GM12878 (cell line): ENCODE measurements at regions of chr5 and their contacts with region 1.

Region 1: GRCh38 chr5:37412515-37413277 is 33.6 kb downstream of the WDR70 start:
- DNase-seq: no peak
- ATAC-seq: peak; percentile 92
- H3K4me3 ChIP-seq: no peak overlapping the region
- H3K27ac ChIP-seq: no peak overlapping the region
- H3K4me1 ChIP-seq: no peaks in the 10 kb centered on the region
- H3K27me3 ChIP-seq: no peaks in the 10 kb centered on the region
- CTCF ChIP-seq: peak; percentile 78 to 90 (median 84)
- EP300 ChIP-seq: no peak
- POLR2A ChIP-seq: no peak
- RAD21 ChIP-seq: peak; percentile 88

Region 2: DNA sequence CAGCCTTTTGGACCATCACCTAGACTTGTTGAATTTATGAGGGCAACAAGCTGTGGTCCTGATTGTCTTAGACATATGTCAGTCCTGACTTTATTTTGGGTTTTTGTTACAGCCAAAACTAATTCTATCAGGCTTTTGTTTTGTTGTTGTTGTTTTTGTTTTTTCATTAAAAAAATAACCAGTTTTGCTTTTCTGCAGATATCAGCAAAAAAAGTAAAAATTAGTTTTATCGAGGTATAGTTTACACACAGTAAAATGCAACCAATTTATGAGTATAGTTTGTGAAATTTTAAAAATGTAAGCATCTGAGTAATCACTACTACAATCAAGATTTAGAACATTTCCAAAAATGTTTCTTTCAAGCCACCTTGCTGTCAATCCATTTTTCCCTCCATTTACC is 15.3 kb after region 1 on chr5:
- CTCF ChIA-PET with region 1: interaction called, 19 read pairs
- POLR2A ChIA-PET with region 1: no interaction called
- RAD21 ChIA-PET with region 1: no interaction called
- SMC1A ChIA-PET with region 1: interaction called, 4 read pairs
- in situ Hi-C with region 1: no loop called
- intact Hi-C with region 1: no loop called
- DNase-seq: no peak
- ATAC-seq: no peak
- H3K4me3 ChIP-seq: no peak overlapping the region
- H3K27ac ChIP-seq: no peak overlapping the region
- H3K4me1 ChIP-seq: no peaks in the 10 kb centered on the region
- H3K27me3 ChIP-seq: no peaks in the 10 kb centered on the region
- CTCF ChIP-seq: no peak
- EP300 ChIP-seq: no peak
- POLR2A ChIP-seq: no peak
- RAD21 ChIP-seq: no peak

Region 3: GRCh38 chr5:37554938-37555337 is 142.2 kb after region 1 on chr5:
- CTCF ChIA-PET with region 1: interaction called, 14 read pairs
- POLR2A ChIA-PET with region 1: no interaction called
- RAD21 ChIA-PET with region 1: interaction called, 8 read pairs
- SMC1A ChIA-PET with region 1: interaction called, 4 read pairs
- in situ Hi-C with region 1: no loop called
- intact Hi-C with region 1: no loop called
- DNase-seq: no peak
- ATAC-seq: peak; percentile 41; the same call in 2 of the 3 replicates
- H3K4me3 ChIP-seq: no peak overlapping the region
- H3K27ac ChIP-seq: no peak overlapping the region
- H3K4me1 ChIP-seq: no peaks in the 10 kb centered on the region
- H3K27me3 ChIP-seq: no peaks in the 10 kb centered on the region
- CTCF ChIP-seq: peak; percentile 32 to 50 (median 33); a peak in 4 of 6 replicates
- EP300 ChIP-seq: no peak
- POLR2A ChIP-seq: no peak
- RAD21 ChIP-seq: peak; percentile 23; the same call in 1 of the 2 replicates

Region 4: DNA sequence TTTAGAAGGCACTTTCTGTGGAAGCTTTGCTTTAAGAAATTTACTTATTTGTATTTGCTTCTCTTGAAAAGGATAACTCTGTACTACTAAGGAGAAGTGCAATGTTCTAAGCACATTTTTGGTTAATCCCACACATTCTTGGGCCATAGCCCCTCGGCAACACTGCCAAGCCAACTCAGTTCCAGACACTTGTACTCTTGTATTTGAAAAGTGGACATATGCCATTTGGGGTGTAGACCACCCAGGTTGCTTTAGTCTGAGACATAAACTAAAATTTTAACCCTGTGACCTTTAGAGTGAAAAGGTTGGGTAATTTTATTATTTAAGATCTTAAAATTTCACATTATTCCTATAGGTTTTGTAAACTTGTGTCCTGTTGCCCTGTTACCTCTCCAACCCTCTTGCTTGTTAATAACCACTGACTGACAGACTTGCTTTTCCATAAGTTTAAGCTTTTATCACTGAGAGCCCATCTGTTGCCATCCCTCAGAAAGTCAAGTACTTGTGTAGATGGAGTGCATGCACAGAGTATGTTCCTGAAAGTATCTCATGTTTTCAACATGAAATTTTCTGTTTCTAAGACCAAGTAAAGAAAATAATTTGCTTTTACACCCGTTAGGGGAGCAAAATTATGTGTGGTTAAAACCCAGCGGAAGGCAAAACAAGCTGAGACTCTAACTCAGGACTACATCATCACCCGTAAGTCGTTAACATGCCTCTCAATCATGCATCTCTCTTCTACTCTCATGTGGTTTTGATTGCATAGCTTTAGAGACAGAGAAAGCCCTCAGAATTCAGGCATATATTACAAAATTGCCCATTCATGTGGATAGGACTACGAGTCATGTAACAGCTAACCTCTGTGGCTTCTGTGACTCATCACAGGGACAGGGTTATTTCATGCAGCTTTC is 309.8 kb after region 1 on chr5:
- CTCF ChIA-PET with region 1: interaction called, 5 read pairs
- POLR2A ChIA-PET with region 1: no interaction called
- RAD21 ChIA-PET with region 1: interaction called, 5 read pairs
- SMC1A ChIA-PET with region 1: no interaction called
- in situ Hi-C with region 1: no loop called
- intact Hi-C with region 1: loop called (anchors 10 kb)
- DNase-seq: peak; percentile 59
- ATAC-seq: peak; percentile 93
- H3K4me3 ChIP-seq: no peak overlapping the region
- H3K27ac ChIP-seq: no peak overlapping the region
- H3K4me1 ChIP-seq: peaks cover 10% of the 10 kb centered on the region
- H3K27me3 ChIP-seq: no peaks in the 10 kb centered on the region
- CTCF ChIP-seq: no peak
- EP300 ChIP-seq: peak in 1 of 2 experiments; percentile 46; a peak in 1 of 4 replicates
- POLR2A ChIP-seq: no peak
- RAD21 ChIP-seq: no peak

Region 5: DNA sequence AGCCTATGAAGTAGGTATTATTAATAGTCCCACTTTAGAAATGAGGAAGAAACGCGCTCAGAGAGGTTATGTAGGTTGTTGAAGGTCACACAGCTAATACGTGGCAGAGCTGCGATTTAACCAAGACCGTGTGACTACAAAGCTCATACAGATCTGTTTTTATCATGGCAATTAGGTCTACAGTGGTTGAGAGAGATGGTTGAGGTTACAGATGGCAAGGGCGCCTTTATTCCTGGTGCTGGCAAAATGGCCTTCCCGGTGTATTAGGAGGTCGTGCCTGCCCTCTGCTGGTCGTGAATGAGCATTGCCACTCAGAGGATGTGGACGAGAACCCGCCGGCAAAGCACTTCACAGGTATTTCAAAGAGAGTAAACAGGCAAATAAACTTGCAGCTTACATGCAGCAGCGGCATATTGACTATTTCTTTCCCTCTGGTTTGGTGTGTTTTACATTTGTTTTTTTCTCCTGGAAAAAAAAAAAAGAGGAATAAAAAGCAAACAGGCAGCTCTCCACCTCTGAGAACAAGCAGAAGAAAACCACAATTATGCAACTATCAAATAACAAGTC is 780.4 kb after region 1 on chr5:
- CTCF ChIA-PET with region 1: interaction called, 23 read pairs
- POLR2A ChIA-PET with region 1: no interaction called
- RAD21 ChIA-PET with region 1: interaction called, 10 read pairs
- SMC1A ChIA-PET with region 1: interaction called, 9 read pairs
- in situ Hi-C with region 1: loop called (anchors 10 kb)
- intact Hi-C with region 1: loop called (anchors 1 kb)
- DNase-seq: no peak
- ATAC-seq: peak; percentile 86
- H3K4me3 ChIP-seq: no peak overlapping the region
- H3K27ac ChIP-seq: no peak overlapping the region
- H3K4me1 ChIP-seq: no peaks in the 10 kb centered on the region
- H3K27me3 ChIP-seq: no peaks in the 10 kb centered on the region; a peak in 2 of 4 replicates
- CTCF ChIP-seq: peak; percentile 86 to 91 (median 87)
- EP300 ChIP-seq: no peak
- POLR2A ChIP-seq: no peak
- RAD21 ChIP-seq: peak; percentile 90